ENCODE measurements at regions of chr19 and their contacts with region 1.

Region 1: GRCh38 chr19:7769171-7769570 is 6.1 kb downstream of the CLEC4M start:
- DNase-seq: no peak
- ATAC-seq: no peak
- H3K4me3 ChIP-seq: no peak overlapping the region
- H3K4me1 ChIP-seq: no peaks in the 10 kb centered on the region
- CTCF ChIP-seq: no peak

Region 2: DNA sequence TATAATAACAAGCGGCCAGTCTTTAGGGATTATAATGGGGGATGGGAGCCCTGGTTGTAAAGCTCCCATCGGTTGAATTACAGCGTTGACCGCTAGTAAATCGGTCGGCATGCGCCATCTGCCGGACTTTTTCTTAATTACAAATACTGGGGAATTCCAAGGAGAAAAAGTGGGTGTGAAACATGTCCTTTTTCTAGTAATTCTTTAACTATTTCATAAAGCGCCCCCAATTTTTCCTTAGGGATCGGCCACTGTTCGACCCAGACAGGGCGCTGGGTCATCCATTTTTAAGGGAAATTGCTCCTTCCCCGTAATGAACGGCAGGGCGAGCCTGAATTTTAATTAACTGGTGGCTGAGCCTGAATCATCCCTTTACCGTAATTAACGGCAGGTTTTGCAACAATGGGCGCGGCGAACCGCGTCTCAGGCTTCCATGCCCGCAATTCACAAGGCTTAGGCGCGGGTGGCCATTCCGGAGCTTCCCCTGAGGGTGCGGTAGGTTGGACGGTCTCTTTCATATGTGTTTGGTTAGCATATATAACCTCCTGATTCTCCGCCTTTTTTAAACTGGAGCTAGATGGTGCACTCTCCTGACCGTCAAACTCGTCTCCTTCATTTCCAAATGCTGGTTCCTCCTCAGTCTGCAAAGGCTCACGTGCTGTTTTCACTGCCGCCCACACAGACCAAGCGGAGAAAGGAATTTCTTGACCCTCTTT is 30.6 kb after region 1 on chr19:
- intact Hi-C with region 1: loop called in 1 of 2 experiments (anchors 2 kb)
- DNase-seq: peak in 2 of 3 donors; percentile 52 to 85
- ATAC-seq: peak; percentile 81
- H3K4me3 ChIP-seq: no peak overlapping the region
- H3K4me1 ChIP-seq: no peaks in the 10 kb centered on the region
- CTCF ChIP-seq: peak; percentile 34